MCF 10A (cell line): ENCODE measurements at regions of chr10 and their contacts with region 1.

Region 1: GRCh38 chr10:13371897-13372470 is 23.9 kb upstream of the SEPHS1 start:
- DNase-seq: peak; percentile 90
- H3K4me3 Mint-ChIP-seq: no peak overlapping the region
- H3K27ac Mint-ChIP-seq: no peak overlapping the region
- H3K4me1 Mint-ChIP-seq: no peaks in the 10 kb centered on the region
- H3K27me3 Mint-ChIP-seq: no peaks in the 10 kb centered on the region
- CTCF ChIP-seq: peak; percentile 94

Region 2: GRCh38 chr10:13335881-13336280 is 36.1 kb before region 1 on chr10:
- CTCF ChIA-PET with region 1: no interaction called
- POLR2A ChIA-PET with region 1: no interaction called
- intact Hi-C with region 1: no loop called
- DNase-seq: no peak
- H3K4me3 Mint-ChIP-seq: no peak overlapping the region
- H3K27ac Mint-ChIP-seq: no peak overlapping the region
- H3K4me1 Mint-ChIP-seq: no peaks in the 10 kb centered on the region
- H3K27me3 Mint-ChIP-seq: no peaks in the 10 kb centered on the region
- CTCF ChIP-seq: no peak

Region 3: GRCh38 chr10:13382703-13383398 is 10.9 kb after region 1 on chr10:
- CTCF ChIA-PET with region 1: interaction called, 49 read pairs
- POLR2A ChIA-PET with region 1: interaction called, 15 read pairs
- intact Hi-C with region 1: no loop called
- DNase-seq: peak; percentile 33
- H3K4me3 Mint-ChIP-seq: peak overlapping the region; percentile 79
- H3K27ac Mint-ChIP-seq: peak overlapping the region; percentile 78
- H3K4me1 Mint-ChIP-seq: peaks cover 17% of the 10 kb centered on the region
- H3K27me3 Mint-ChIP-seq: no peaks in the 10 kb centered on the region
- CTCF ChIP-seq: no peak

Region 4: DNA sequence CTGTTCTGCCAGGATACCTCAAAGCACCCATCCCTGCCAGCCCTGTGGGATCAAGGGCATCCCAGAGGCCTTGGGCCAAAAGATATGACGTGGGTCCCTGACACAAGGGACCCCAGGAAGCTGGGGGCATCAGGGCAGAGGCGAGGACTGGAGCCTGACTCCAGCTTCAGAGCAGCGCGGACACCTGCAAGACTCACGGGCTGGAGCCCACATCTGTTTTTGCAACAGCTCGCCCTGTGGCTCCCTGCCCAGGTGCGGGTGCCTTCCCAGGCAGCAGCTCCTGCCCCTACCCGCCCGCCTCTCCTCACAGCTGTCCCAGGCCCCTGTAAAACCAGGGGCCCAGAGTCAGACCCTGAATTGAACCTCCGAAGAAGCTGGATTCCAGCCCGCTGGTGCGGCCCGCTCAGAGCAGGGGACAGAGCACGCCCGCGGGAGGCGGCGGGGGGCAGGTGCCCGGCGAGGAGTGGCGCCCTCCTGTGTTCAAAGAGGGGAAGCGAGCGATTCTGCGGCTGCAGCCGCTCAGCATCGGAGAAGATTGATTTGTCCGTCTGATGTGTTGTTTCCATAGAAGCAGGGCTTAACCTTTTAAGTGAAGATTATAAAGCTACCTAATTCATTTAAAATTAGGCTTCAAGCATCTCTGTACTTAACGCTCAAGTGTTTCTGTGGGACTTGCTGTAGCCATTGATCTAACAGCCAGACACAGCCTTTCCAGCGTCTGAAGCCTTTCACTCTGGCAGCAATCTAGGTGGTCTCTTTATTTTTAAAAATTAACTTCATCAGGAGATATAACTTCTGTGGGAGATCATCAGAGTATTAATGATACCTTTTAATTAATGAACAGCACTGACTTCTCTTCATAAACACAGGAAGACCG is 68.4 kb after region 1 on chr10:
- CTCF ChIA-PET with region 1: interaction called, 91 read pairs
- POLR2A ChIA-PET with region 1: interaction called, 4 read pairs
- intact Hi-C with region 1: loop called (anchors 1 kb)
- DNase-seq: peak; percentile 53
- H3K4me3 Mint-ChIP-seq: peak overlapping the region; percentile 59
- H3K27ac Mint-ChIP-seq: no peak overlapping the region
- H3K4me1 Mint-ChIP-seq: peaks cover 6% of the 10 kb centered on the region
- H3K27me3 Mint-ChIP-seq: peaks cover 18% of the 10 kb centered on the region
- CTCF ChIP-seq: peak; percentile 87

Region 5: DNA sequence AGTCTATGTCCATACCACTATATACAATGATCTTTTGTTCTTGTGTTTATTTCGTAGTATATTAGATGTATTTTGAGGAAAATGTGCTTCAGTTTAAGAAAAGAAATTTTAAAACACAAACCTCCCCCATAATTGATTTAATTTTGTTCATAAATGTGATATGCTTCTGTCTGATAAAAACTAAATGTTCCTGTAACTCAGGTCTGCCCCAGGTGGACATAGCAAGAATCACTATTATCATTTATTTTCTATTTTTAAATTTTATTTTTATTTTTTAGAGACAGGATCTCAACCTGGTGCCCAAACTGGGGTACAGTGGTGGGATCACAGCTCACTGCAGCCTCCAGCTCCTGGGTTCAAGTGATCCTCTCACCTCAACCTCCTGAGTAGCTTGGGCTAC is 113.6 kb after region 1 on chr10:
- CTCF ChIA-PET with region 1: interaction called, 16 read pairs
- POLR2A ChIA-PET with region 1: no interaction called
- intact Hi-C with region 1: no loop called
- DNase-seq: peak; percentile 1
- H3K4me3 Mint-ChIP-seq: no peak overlapping the region
- H3K27ac Mint-ChIP-seq: no peak overlapping the region
- H3K4me1 Mint-ChIP-seq: no peaks in the 10 kb centered on the region
- H3K27me3 Mint-ChIP-seq: no peaks in the 10 kb centered on the region
- CTCF ChIP-seq: peak; percentile 27

Region 6: GRCh38 chr10:13536674-13537366 is 164.8 kb after region 1 on chr10:
- CTCF ChIA-PET with region 1: interaction called, 28 read pairs
- POLR2A ChIA-PET with region 1: no interaction called
- intact Hi-C with region 1: loop called (anchors 2 kb)
- DNase-seq: peak; percentile 50
- H3K4me3 Mint-ChIP-seq: no peak overlapping the region
- H3K27ac Mint-ChIP-seq: no peak overlapping the region
- H3K4me1 Mint-ChIP-seq: no peaks in the 10 kb centered on the region
- H3K27me3 Mint-ChIP-seq: peaks cover 44% of the 10 kb centered on the region
- CTCF ChIP-seq: peak; percentile 37

Region 7: DNA sequence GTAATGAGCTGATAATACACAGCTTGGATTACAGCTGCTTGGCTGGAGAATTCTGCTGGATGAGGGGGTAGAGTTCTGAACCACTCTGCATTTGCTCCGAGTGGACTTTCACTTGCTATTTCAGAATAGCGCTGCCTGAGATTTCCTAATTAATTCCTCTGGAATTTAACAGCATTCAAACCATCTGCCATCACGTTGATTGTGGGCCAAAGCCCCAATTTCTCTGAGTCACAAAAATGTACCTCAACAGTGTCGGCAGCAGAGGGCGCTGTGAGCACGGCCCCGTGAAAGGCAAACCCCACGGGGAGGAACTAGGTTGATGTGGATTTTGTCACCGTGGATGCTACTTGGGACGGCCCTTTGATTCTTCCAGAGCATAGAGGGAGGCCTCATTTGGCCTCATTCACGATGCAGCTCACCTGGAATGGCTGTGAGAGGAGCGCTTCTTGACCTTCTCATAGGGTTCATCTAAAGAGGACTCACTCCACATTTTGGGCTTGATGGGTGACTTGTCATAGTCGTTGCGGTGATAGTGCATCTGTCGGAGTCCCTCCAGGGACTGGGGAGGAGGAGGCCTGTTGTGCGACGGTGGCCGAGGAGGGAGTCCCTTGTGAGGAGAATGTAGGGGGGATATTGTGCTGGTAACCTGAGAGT is 288.0 kb after region 1 on chr10:
- CTCF ChIA-PET with region 1: interaction called, 11 read pairs
- POLR2A ChIA-PET with region 1: no interaction called
- intact Hi-C with region 1: loop called (anchors 5 kb)
- DNase-seq: peak; percentile 59
- H3K4me3 Mint-ChIP-seq: peak overlapping the region; percentile 10
- H3K27ac Mint-ChIP-seq: no peak overlapping the region
- H3K4me1 Mint-ChIP-seq: peaks cover 17% of the 10 kb centered on the region
- H3K27me3 Mint-ChIP-seq: no peaks in the 10 kb centered on the region
- CTCF ChIP-seq: peak; percentile 81